IMR-90 (cell line): ENCODE measurements at regions of chrX and their contacts with region 1.

Region 1: DNA sequence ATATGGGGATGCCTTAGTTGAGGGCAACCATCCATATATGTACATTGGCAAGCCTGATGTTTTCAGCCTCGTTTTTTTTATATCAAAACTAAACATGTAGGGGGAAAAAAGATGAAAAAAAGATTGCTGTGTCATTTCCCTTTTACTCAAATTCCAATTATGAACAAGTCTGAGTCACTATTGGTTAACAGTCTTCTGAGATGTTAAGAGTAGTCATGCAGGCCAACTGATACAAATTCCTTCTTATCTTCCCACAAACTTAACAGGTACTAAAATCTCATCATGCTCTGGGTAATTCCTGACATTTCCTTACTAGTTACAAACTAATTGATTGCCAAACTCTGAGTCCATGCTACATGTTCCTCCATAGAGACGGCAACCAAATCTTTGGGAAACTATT is 222.1 kb downstream of the FRMPD4 start:
- DNase-seq: peak; percentile 86
- ATAC-seq: peak; percentile 76
- H3K4me3 ChIP-seq: no peak overlapping the region
- H3K27ac ChIP-seq: peak overlapping the region; percentile 75
- H3K4me1 ChIP-seq: peaks cover 2% of the 10 kb centered on the region; the same call in 1 of the 2 replicates
- H3K27me3 ChIP-seq: no peaks in the 10 kb centered on the region
- CTCF ChIP-seq: no peak
- POLR2A ChIP-seq: no peak
- RAD21 ChIP-seq: no peak

Region 2: DNA sequence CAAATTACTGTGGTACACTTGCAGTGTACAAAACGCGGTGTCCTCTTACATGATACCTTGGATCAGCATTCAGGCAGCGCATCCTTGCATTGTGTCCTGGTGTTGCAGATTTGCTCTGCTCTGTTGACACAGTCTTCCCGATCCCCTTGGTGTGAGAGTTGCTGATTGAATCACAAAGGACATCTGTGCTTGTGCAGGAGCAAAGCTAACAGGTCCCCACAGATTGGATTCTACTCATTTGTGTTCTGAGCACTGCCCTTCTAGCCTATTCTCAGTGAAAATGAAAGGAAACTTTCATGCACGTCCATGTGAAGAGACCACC is 50.7 kb before region 1 on chrX:
- CTCF ChIA-PET with region 1: no interaction called
- POLR2A ChIA-PET with region 1: interaction called, 11 read pairs
- dilution Hi-C with region 1: no loop called
- in situ Hi-C with region 1: no loop called
- intact Hi-C with region 1: no loop called
- DNase-seq: no peak
- ATAC-seq: no peak
- H3K4me3 ChIP-seq: no peak overlapping the region
- H3K27ac ChIP-seq: no peak overlapping the region
- H3K4me1 ChIP-seq: 0 out of 2 replicates have a peak, but pooled peaks cover 2% of the 10 kb centered on the region
- H3K27me3 ChIP-seq: no peaks in the 10 kb centered on the region
- CTCF ChIP-seq: no peak
- POLR2A ChIP-seq: no peak
- RAD21 ChIP-seq: no peak

Region 3: DNA sequence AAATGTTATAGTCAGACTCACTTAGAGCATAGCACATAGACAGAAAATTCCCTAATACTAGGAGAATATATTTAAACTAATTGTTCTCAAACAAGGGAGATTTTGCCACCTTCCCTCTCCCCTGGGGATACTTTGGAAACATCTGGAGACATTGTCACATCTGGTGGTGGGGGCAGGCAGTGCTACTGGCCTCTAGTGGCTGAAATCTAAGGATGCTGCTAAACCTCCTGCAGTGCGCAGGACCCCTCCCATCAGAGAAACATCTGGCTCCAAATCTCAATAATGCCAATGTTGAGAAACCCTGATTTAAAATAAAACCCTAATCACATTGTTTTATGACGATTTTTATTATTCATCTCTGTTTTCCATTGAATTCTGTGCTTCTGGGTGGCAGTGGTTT is 22.8 kb after region 1 on chrX:
- CTCF ChIA-PET with region 1: no interaction called
- POLR2A ChIA-PET with region 1: no interaction called
- dilution Hi-C with region 1: no loop called
- in situ Hi-C with region 1: no loop called
- intact Hi-C with region 1: no loop called
- DNase-seq: no peak
- ATAC-seq: no peak
- H3K4me3 ChIP-seq: no peak overlapping the region
- H3K27ac ChIP-seq: no peak overlapping the region
- H3K4me1 ChIP-seq: no peaks in the 10 kb centered on the region; the same call in 1 of the 2 replicates
- H3K27me3 ChIP-seq: no peaks in the 10 kb centered on the region
- CTCF ChIP-seq: peak; percentile 20; the same call in 1 of the 2 replicates
- POLR2A ChIP-seq: no peak
- RAD21 ChIP-seq: no peak; the same call in 1 of the 2 replicates

Region 4: GRCh38 chrX:12567857-12568256 is 207.5 kb after region 1 on chrX:
- CTCF ChIA-PET with region 1: no interaction called
- POLR2A ChIA-PET with region 1: no interaction called
- dilution Hi-C with region 1: no loop called
- in situ Hi-C with region 1: no loop called
- intact Hi-C with region 1: loop called (anchors 5 kb)
- DNase-seq: peak; percentile 13
- ATAC-seq: no peak
- H3K4me3 ChIP-seq: no peak overlapping the region
- H3K27ac ChIP-seq: no peak overlapping the region
- H3K4me1 ChIP-seq: no peaks in the 10 kb centered on the region
- H3K27me3 ChIP-seq: no peaks in the 10 kb centered on the region
- CTCF ChIP-seq: peak; percentile 62
- POLR2A ChIP-seq: no peak
- RAD21 ChIP-seq: peak; percentile 49